Activated CD4-positive, alpha-beta T cell treated with anti-CD3 and anti-CD28 coated beads for 36 hours (primary cell): ENCODE measurements at regions of chr19 and their contacts with region 1.

Region 1: DNA sequence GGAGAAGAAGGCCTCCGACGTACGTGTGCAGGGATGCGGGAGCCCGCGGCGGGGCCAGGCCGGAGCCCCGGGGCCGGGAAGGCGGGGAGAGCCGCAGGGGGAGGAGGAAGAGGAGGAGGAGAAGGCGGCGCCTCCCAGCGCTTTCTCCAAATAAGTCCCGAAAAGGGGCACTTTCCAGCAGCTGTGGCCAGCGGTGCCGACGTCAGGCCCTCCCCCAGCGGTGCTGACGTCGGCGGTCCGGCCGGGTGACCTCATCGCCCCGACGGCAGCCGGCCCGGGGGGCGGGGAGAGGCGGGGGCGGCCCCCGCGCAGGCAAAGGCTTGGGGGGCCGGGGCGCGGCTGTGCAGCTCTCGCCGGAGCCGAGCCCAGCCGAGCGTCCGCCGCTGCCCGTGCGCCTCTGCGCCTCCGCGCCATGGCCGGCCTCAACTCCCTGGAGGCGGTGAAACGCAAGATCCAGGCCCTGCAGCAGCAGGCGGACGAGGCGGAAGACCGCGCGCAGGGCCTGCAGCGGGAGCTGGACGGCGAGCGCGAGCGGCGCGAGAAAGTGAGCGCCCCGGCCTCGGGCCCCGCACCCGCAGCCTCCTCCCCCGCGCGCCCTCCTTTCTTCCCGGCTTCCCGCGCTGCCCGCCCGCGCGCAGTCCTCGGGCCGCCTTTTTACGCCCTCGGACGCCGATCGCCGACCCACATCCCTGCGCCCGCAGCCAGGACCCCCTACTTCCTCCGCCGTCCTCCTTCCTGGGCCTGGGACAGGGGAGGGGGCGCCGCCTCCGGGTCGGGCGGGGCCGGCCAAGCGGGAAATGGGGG is at the start of gene TPM4:
- DNase-seq: peak; percentile 94
- ATAC-seq: peak; percentile 42
- H3K4me3 Mint-ChIP-seq: peak within 1 kb of the TSS; percentile 99
- H3K27ac Mint-ChIP-seq: peak within 1 kb of the TSS; percentile 98
- H3K4me1 Mint-ChIP-seq: peaks cover 64% of the 10 kb centered on the region
- H3K27me3 Mint-ChIP-seq: no peaks in the 10 kb centered on the region
- total RNA-seq, gene TPM4: 362 to 416 TPM

Region 2: DNA sequence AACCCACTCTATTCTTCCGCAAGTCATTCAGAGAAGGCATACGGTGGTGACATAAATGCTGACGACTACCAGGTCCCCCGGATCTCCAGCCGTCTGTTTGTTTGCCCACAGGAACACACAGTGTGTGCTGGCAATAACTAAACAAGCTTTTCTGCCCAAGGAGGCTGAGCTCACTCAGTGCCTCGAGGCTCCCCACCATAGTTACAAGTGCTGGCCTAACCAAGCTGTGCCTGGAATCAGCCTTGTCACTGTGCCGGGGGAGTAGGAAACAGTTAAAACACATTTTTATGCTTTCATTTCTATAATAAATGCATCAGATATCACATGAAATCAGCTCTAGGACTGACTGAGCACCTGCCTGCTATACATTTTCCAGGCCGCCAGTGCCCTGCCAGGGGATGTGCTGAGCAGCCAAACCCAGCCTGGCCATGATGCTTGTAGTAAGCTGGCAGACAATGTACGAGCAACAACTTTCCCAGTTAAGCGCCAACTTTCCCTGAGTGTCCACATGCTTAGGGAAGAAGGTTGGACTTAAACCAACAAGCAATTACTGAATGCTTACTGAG is 772.1 kb before region 1 on chr19:
- CTCF ChIA-PET with region 1: no interaction called
- POLR2A ChIA-PET with region 1: interaction called, 3 read pairs
- intact Hi-C with region 1: loop called in 1 of 2 experiments (anchors 2 kb)
- DNase-seq: peak; percentile 76
- ATAC-seq: peak; percentile 65
- H3K4me3 Mint-ChIP-seq: peak overlapping the region; percentile 52
- H3K27ac Mint-ChIP-seq: peak overlapping the region; percentile 95
- H3K4me1 Mint-ChIP-seq: peaks cover 81% of the 10 kb centered on the region
- H3K27me3 Mint-ChIP-seq: no peaks in the 10 kb centered on the region

Region 3: GRCh38 chr19:15836595-15837337 is 239.6 kb before region 1 on chr19:
- CTCF ChIA-PET with region 1: no interaction called
- POLR2A ChIA-PET with region 1: interaction called, 3 read pairs
- intact Hi-C with region 1: loop called in 1 of 2 experiments (anchors 2 kb)
- DNase-seq: peak; percentile 96
- ATAC-seq: peak; percentile 96
- H3K4me3 Mint-ChIP-seq: peak overlapping the region; percentile 85
- H3K27ac Mint-ChIP-seq: peak overlapping the region; percentile 98
- H3K4me1 Mint-ChIP-seq: peaks cover 15% of the 10 kb centered on the region
- H3K27me3 Mint-ChIP-seq: no peaks in the 10 kb centered on the region

Region 4: GRCh38 chr19:16118489-16119033 is 42.2 kb after region 1 on chr19:
- CTCF ChIA-PET with region 1: interaction called, 7 read pairs
- POLR2A ChIA-PET with region 1: interaction called, 7 read pairs
- intact Hi-C with region 1: loop called in 1 of 2 experiments (anchors 1 kb)
- DNase-seq: peak; percentile 74
- ATAC-seq: peak; percentile 75
- H3K4me3 Mint-ChIP-seq: peak overlapping the region; percentile 35
- H3K27ac Mint-ChIP-seq: peak overlapping the region; percentile 89
- H3K4me1 Mint-ChIP-seq: peaks cover 59% of the 10 kb centered on the region
- H3K27me3 Mint-ChIP-seq: no peaks in the 10 kb centered on the region

Region 5: GRCh38 chr19:16371540-16371986 is 295.2 kb after region 1 on chr19:
- CTCF ChIA-PET with region 1: no interaction called
- POLR2A ChIA-PET with region 1: no interaction called
- intact Hi-C with region 1: loop called in 1 of 2 experiments (anchors 1 kb)
- DNase-seq: peak; percentile 92
- ATAC-seq: peak; percentile 82
- H3K4me3 Mint-ChIP-seq: peak overlapping the region; percentile 22
- H3K27ac Mint-ChIP-seq: peak overlapping the region; percentile 76
- H3K4me1 Mint-ChIP-seq: peaks cover 46% of the 10 kb centered on the region
- H3K27me3 Mint-ChIP-seq: peaks cover 14% of the 10 kb centered on the region

Region 6: GRCh38 chr19:17703824-17704463 is 1627.6 kb after region 1 on chr19:
- CTCF ChIA-PET with region 1: no interaction called
- POLR2A ChIA-PET with region 1: no interaction called
- intact Hi-C with region 1: no loop called
- DNase-seq: peak; percentile 85
- ATAC-seq: peak; percentile 96
- H3K4me3 Mint-ChIP-seq: no peak overlapping the region
- H3K27ac Mint-ChIP-seq: no peak overlapping the region
- H3K4me1 Mint-ChIP-seq: no peaks in the 10 kb centered on the region
- H3K27me3 Mint-ChIP-seq: peaks cover 5% of the 10 kb centered on the region